ENCODE measurements at regions of chr16 and their contacts with region 1.

Region 1: DNA sequence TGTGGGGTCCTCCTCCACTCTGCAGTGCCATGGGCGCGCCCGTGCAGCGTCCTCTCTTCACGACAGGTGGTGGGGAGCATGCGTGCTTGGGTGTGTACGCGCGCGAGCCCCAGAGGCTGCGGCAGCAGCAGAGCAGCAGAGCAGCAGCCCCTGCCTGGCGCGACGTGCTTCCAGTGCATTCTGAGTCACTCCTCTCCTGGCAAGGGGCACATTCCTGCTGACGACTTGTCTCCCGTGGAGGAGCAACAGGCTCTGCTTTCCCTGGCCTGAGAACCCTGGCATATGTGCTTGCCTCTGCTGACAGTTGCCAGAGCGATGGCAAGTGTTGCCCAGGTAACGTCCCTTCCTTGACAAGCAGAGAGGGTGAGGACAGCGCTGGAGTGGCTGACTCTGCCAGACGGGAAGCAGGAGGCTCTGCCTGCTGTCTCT is 133.8 kb upstream of the PLCG2 start:
- DNase-seq: peak in 1 of 2 donors; percentile 72
- ATAC-seq: peak; percentile 38

Region 2: DNA sequence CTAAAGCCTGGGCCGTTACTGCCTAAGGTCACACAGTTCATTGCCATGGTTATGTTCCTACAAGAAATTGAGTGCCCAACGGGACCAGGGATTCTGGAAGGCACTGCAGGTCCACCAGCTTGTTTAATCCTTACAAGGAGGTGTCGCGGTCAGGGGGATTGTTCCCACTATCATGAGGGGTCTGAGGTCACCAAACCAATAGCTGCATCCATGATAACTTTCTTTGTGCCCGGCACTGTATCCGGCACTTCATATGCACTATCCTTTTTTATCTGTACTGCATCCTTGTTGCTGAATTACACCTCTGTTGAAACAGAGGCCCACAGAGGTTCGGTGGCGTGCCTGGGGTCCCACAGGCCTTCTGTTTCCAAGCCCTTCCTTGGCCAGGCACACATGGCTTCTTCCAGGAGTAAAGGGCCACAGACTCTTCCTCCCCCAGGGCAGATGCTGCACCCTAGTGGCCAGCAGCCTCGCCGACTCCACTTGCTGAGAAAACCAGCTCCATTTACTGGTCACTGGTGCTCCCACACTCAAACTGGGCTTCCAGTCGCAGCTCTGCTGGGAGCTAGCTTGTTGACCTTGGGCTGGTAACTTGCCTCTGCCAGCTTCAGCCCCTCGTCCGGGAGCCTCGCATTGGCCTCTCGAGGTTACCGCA is 51.8 kb after region 1 on chr16:
- intact Hi-C with region 1: loop called in 1 of 2 experiments (anchors 10 kb)
- DNase-seq: peak; percentile 52 to 72
- ATAC-seq: peak; percentile 78